HepG2 (cell line): ENCODE measurements at regions of chr2 and their contacts with region 1.

Region 1: DNA sequence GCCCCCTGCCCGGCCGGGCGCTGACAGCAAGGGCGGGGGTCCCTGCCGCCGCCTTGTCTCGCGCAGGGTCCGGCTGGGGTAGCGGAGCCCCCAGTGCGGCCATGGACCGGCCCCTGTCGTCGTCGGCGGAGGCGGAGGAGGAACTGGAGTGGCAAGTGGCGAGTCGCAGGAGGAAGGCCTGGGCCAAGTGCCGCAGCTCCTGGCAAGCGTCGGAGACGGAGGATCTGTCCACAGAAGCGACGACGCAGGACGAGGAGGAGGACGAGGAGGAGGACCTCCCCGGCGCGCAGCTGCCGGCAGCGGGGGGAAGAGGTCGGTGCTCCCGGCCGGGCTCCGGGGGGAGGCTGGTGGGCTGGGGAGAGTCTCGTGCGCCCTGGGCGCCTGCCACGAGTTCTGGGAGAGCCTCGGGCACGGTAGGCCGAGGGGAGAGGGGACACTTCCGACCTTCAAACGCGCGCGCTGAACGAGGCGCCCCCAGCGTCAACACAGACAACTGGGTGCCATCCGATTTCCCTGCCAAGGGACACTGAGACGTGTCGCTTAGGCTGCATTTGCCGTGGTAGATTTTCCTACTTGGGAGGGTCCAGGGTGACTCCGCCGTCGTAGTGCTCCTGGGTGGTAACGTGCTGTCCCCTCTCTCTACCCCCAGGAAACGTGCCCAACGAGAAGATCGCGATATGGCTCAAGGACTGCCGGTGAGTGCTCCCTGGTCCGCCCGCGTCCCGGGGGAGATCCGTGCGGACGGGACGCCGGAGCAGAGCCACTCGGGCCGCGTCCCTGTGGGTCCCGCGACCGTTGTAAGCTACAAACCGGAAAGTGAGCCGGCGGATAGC is 652 bp downstream of the ITPRID2 start:
- DNase-seq: peak; percentile 72
- ATAC-seq: peak; percentile 87
- H3K4me3 ChIP-seq: peak overlapping the region; percentile 79 to 96 (median 80)
- H3K27ac ChIP-seq: peak overlapping the region; percentile 96
- H3K4me1 ChIP-seq: peaks cover 59% of the 10 kb centered on the region
- H3K27me3 ChIP-seq: no peaks in the 10 kb centered on the region
- CTCF ChIP-seq: peak; percentile 63
- EP300 ChIP-seq: no peak
- POLR2A ChIP-seq: peak; percentile 66 to 91
- RAD21 ChIP-seq: peak; percentile 35; the same call in 1 of the 2 replicates

Region 2: DNA sequence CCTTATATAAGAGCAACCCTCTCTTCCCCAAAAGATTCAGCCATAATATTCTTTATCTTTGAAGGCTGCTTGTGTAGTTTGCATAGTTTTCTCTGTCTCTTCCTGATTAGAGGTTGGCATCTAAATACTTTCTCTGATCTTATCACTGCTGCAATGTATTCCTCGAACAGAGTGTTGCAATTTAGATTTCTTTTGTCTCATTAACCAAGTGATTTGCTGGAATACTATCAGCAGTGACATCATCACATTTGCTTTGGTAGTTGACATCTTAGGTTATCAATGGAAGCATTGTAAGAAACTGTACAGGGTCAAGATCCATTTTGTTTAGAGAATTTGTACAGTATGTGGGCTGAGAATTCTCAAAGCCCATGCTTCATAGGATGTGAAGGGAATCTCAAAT is 139.9 kb before region 1 on chr2:
- CTCF ChIA-PET with region 1: no interaction called
- POLR2A ChIA-PET with region 1: no interaction called
- in situ Hi-C with region 1: loop called (anchors 5 kb)
- intact Hi-C with region 1: no loop called
- DNase-seq: peak; percentile 24
- ATAC-seq: no peak
- H3K4me3 ChIP-seq: no peak overlapping the region
- H3K27ac ChIP-seq: no peak overlapping the region
- H3K4me1 ChIP-seq: peaks cover 24% of the 10 kb centered on the region
- H3K27me3 ChIP-seq: no peaks in the 10 kb centered on the region; a peak in 2 of 5 replicates
- CTCF ChIP-seq: no peak
- EP300 ChIP-seq: no peak
- POLR2A ChIP-seq: no peak
- RAD21 ChIP-seq: no peak

Region 3: GRCh38 chr2:181790716-181791649 is 101.2 kb before region 1 on chr2:
- CTCF ChIA-PET with region 1: no interaction called
- POLR2A ChIA-PET with region 1: interaction called, 6 read pairs
- in situ Hi-C with region 1: no loop called
- intact Hi-C with region 1: loop called (anchors 5 kb)
- DNase-seq: peak; percentile 88
- ATAC-seq: peak; percentile 96
- H3K4me3 ChIP-seq: peak overlapping the region; percentile 11 to 53 (median 31)
- H3K27ac ChIP-seq: peak overlapping the region; percentile 82
- H3K4me1 ChIP-seq: peaks cover 43% of the 10 kb centered on the region
- H3K27me3 ChIP-seq: no peaks in the 10 kb centered on the region
- CTCF ChIP-seq: no peak
- EP300 ChIP-seq: peak in 1 of 2 experiments; percentile 71; a peak in 2 of 4 replicates
- POLR2A ChIP-seq: no peak; a peak in 1 of 4 replicates
- RAD21 ChIP-seq: 0 out of 2 replicates have a peak, but pooled peaks have one; percentile 21

Region 4: GRCh38 chr2:181904022-181904632 is 11.9 kb after region 1 on chr2:
- CTCF ChIA-PET with region 1: interaction called, 4 read pairs
- POLR2A ChIA-PET with region 1: interaction called, 7 read pairs
- in situ Hi-C with region 1: no loop called
- intact Hi-C with region 1: loop called (anchors 2 kb)
- DNase-seq: peak; percentile 66
- ATAC-seq: peak; percentile 72
- H3K4me3 ChIP-seq: no peak overlapping the region
- H3K27ac ChIP-seq: no peak overlapping the region
- H3K4me1 ChIP-seq: peaks cover 47% of the 10 kb centered on the region
- H3K27me3 ChIP-seq: no peaks in the 10 kb centered on the region
- CTCF ChIP-seq: peak; percentile 63
- EP300 ChIP-seq: no peak
- POLR2A ChIP-seq: no peak
- RAD21 ChIP-seq: peak; percentile 31; the same call in 1 of the 2 replicates

Region 5: GRCh38 chr2:181970160-181970794 is 78.1 kb after region 1 on chr2:
- CTCF ChIA-PET with region 1: no interaction called
- POLR2A ChIA-PET with region 1: no interaction called
- in situ Hi-C with region 1: no loop called
- intact Hi-C with region 1: no loop called
- DNase-seq: peak; percentile 16
- ATAC-seq: peak; percentile 99
- H3K4me3 ChIP-seq: no peak overlapping the region
- H3K27ac ChIP-seq: no peak overlapping the region
- H3K4me1 ChIP-seq: peaks cover 12% of the 10 kb centered on the region
- H3K27me3 ChIP-seq: no peaks in the 10 kb centered on the region
- CTCF ChIP-seq: peak; percentile 31; the same call in 1 of the 2 replicates
- EP300 ChIP-seq: no peak
- POLR2A ChIP-seq: no peak
- RAD21 ChIP-seq: no peak

Region 6: DNA sequence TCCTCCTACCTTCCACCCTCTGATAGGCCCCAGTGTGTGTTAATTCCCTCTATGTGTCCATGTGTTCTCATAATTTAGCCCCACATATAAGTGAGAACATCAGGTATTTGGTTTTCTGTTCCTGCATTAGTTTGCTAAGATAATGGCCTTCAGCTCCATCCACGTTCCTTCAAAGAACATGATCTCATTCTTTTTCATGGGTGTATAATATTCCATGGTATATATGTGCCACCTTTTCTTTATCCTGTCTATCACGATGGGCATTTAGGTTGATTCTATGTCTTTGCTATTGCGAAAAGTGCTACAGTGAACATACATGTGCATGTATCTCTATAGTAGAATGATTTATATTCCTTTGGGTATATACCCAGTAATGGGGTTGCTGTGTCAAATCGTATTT is 581.5 kb after region 1 on chr2:
- CTCF ChIA-PET with region 1: no interaction called
- POLR2A ChIA-PET with region 1: no interaction called
- in situ Hi-C with region 1: no loop called
- intact Hi-C with region 1: no loop called
- DNase-seq: no peak
- ATAC-seq: no peak
- H3K4me3 ChIP-seq: no peak overlapping the region
- H3K27ac ChIP-seq: no peak overlapping the region
- H3K4me1 ChIP-seq: no peaks in the 10 kb centered on the region
- H3K27me3 ChIP-seq: no peaks in the 10 kb centered on the region
- CTCF ChIP-seq: no peak
- EP300 ChIP-seq: no peak
- POLR2A ChIP-seq: no peak
- RAD21 ChIP-seq: no peak

Region 7: GRCh38 chr2:182715896-182716668 is 823.9 kb after region 1 on chr2 and contains the start of gene DNAJC10:
- CTCF ChIA-PET with region 1: no interaction called
- POLR2A ChIA-PET with region 1: no interaction called
- in situ Hi-C with region 1: no loop called
- intact Hi-C with region 1: loop called (anchors 10 kb)
- DNase-seq: peak; percentile 87
- ATAC-seq: peak; percentile 97
- H3K4me3 ChIP-seq: peak within 1 kb of the TSS; percentile 88 to 100 (median 98)
- H3K27ac ChIP-seq: peak within 1 kb of the TSS; percentile 81
- H3K4me1 ChIP-seq: peaks cover 27% of the 10 kb centered on the region
- H3K27me3 ChIP-seq: no peaks in the 10 kb centered on the region; a peak in 1 of 5 replicates
- CTCF ChIP-seq: no peak; the same call in 1 of the 2 replicates
- EP300 ChIP-seq: no peak; a peak in 1 of 4 replicates
- POLR2A ChIP-seq: peak; percentile 77 to 98; a peak in 3 of 4 replicates
- RAD21 ChIP-seq: peak; percentile 51; the same call in 1 of the 2 replicates
- total RNA-seq, gene DNAJC10: 178 and 190 TPM in 2 replicates